ENCODE measurements at regions of chr4 and their contacts with region 1.

Region 1: DNA sequence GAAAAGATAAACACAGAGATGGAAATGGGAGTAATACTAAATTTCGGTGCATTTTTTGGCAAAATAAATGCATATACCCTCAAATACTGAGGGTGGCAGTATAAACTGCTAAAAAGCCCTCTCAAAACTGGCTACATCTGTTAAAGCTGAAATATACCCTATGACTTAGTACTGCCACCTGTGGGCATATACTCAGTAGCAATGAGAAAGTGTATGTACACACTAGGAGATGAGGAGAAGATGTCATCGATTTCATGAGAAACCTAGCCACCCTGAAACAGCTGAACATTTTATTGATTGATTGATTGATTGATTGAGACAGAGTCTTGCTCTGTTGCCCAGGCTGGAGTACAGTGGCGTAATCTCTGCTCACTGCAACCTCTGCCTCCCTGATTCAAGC is 12.2 kb upstream of the TMEM128 start:
- DNase-seq: peak; percentile 50
- H3K4me3 ChIP-seq: no peak overlapping the region
- H3K27ac ChIP-seq: no peak overlapping the region
- H3K4me1 ChIP-seq: no peaks in the 10 kb centered on the region
- H3K27me3 ChIP-seq: no peaks in the 10 kb centered on the region
- CTCF ChIP-seq: peak; percentile 38 to 44
- POLR2A ChIP-seq: no peak

Region 2: DNA sequence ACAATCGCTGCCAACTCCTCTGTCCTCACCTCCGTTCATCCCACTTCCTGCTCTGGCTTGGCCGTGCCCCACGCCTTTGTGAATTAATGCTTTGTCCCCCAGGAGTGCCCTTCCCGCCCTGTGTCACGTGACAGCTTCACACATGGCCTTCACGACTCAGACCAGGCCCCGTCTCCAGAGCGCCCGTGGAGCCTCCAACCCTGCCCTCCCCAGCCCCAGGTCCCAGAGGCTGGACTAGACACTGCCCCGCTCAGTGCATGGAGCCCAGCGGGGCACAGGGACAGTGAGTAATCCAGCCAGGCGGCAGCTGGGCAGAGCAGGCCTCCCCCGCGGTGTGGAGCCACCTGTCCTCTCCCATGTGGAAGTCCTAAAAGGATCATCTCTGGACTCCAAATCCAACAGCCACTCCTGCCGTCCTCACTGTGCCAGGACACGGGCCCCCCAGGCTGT is 486.7 kb before region 1 on chr4:
- CTCF ChIA-PET with region 1: no interaction called
- POLR2A ChIA-PET with region 1: no interaction called
- dilution Hi-C with region 1: no loop called
- intact Hi-C with region 1: no loop called
- DNase-seq: no peak
- H3K4me3 ChIP-seq: no peak overlapping the region
- H3K27ac ChIP-seq: no peak overlapping the region
- H3K4me1 ChIP-seq: no peaks in the 10 kb centered on the region
- H3K27me3 ChIP-seq: peaks cover 4% of the 10 kb centered on the region in 2 experiments
- CTCF ChIP-seq: no peak
- POLR2A ChIP-seq: no peak

Region 3: GRCh38 chr4:4248029-4248884 is 12.0 kb before region 1 on chr4 and contains the start of gene TMEM128:
- CTCF ChIA-PET with region 1: interaction called, 18 read pairs
- POLR2A ChIA-PET with region 1: no interaction called
- dilution Hi-C with region 1: no loop called
- intact Hi-C with region 1: no loop called
- DNase-seq: peak; percentile 93
- H3K4me3 ChIP-seq: peak within 1 kb of the TSS; percentile 87 to 94 (median 88)
- H3K27ac ChIP-seq: peak within 1 kb of the TSS; percentile 99
- H3K4me1 ChIP-seq: peaks cover 14% of the 10 kb centered on the region
- H3K27me3 ChIP-seq: no peaks in the 10 kb centered on the region
- CTCF ChIP-seq: peak; percentile 16 to 34
- POLR2A ChIP-seq: peak; percentile 86
- total RNA-seq, gene TMEM128: 11.5 and 13.2 TPM in 2 replicates

Region 4: DNA sequence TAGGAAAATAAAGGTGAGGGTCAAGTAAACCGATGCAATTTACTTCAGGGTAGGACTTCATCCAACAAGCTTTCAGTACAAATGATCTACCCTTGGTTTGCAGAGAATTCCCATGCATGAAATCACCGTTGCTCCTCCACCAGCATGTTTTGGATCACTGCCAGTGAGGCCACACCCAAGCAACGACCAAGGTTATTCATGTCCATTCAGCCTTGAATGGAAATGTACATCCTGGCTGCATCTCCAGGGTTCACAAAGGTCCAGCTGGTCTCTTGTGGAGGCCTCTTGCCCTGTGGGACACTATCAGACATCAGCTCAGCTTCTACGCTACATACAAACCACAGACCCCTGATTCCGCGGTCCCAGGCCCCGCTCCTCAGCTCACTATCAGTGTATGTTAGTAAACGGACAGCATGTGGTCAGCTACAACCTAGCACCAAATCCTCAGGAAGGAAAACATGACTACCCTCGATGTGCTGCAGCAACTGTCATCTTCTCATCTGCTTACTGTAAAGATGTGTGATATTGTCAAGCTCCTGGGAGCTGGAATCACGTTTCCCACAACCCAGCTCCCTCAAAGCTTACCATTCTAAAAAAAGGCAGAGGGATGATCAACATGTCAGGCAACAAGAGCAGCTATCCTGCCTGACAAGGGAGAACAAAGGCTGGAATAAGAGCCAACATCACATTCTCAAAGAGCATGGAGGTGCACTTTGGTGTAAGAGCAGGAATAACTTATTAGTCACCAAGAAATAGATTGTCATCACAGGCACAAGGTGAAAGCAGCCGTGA is 24.8 kb after region 1 on chr4:
- CTCF ChIA-PET with region 1: interaction called, 11 read pairs
- POLR2A ChIA-PET with region 1: no interaction called
- dilution Hi-C with region 1: no loop called
- intact Hi-C with region 1: no loop called
- DNase-seq: no peak
- H3K4me3 ChIP-seq: no peak overlapping the region
- H3K27ac ChIP-seq: no peak overlapping the region
- H3K4me1 ChIP-seq: peaks cover 10% of the 10 kb centered on the region
- H3K27me3 ChIP-seq: no peaks in the 10 kb centered on the region
- CTCF ChIP-seq: no peak
- POLR2A ChIP-seq: no peak

Region 5: GRCh38 chr4:4430492-4431197 is 170.4 kb after region 1 on chr4:
- CTCF ChIA-PET with region 1: interaction called, 21 read pairs
- POLR2A ChIA-PET with region 1: no interaction called
- dilution Hi-C with region 1: no loop called
- intact Hi-C with region 1: loop called (anchors 1 kb)
- DNase-seq: peak; percentile 50
- H3K4me3 ChIP-seq: no peak overlapping the region
- H3K27ac ChIP-seq: no peak overlapping the region
- H3K4me1 ChIP-seq: peaks cover 4% of the 10 kb centered on the region
- H3K27me3 ChIP-seq: no peaks in the 10 kb centered on the region
- CTCF ChIP-seq: peak; percentile 73 to 74
- POLR2A ChIP-seq: no peak